PC-3 (cell line): ENCODE measurements at regions of chr22 and their contacts with region 1.

Region 1: GRCh38 chr22:26740253-26740652 is 82.9 kb downstream of the MIAT start:
- DNase-seq: no peak
- ATAC-seq: no peak
- H3K4me3 ChIP-seq: no peak overlapping the region
- H3K27ac ChIP-seq: no peak overlapping the region
- H3K4me1 ChIP-seq: peaks cover 6% of the 10 kb centered on the region
- H3K27me3 ChIP-seq: no peaks in the 10 kb centered on the region
- CTCF ChIP-seq: no peak

Region 2: GRCh38 chr22:26672590-26673468 is 67.4 kb before region 1 on chr22:
- CTCF ChIA-PET with region 1: no interaction called
- POLR2A ChIA-PET with region 1: no interaction called
- intact Hi-C with region 1: loop called (anchors 10 kb)
- DNase-seq: peak; percentile 82
- ATAC-seq: peak; percentile 86
- H3K4me3 ChIP-seq: peak overlapping the region; percentile 85
- H3K27ac ChIP-seq: peak overlapping the region; percentile 91
- H3K4me1 ChIP-seq: peaks cover 16% of the 10 kb centered on the region
- H3K27me3 ChIP-seq: no peaks in the 10 kb centered on the region
- CTCF ChIP-seq: peak; percentile 42; the same call in 1 of the 2 replicates